Activated CD8-positive, alpha-beta T cell treated with anti-CD3 and anti-CD28 coated beads for 36 hours (primary cell): ENCODE measurements at regions of chr9 and their contacts with region 1.

Region 1: GRCh38 chr9:70352802-70353201 is 61.7 kb downstream of the KLF9 start:
- DNase-seq: no peak
- ATAC-seq: no peak
- H3K4me3 Mint-ChIP-seq: no peak overlapping the region
- H3K27ac Mint-ChIP-seq: no peak overlapping the region
- H3K4me1 Mint-ChIP-seq: peaks cover 2% of the 10 kb centered on the region
- H3K27me3 Mint-ChIP-seq: no peaks in the 10 kb centered on the region
- CTCF ChIP-seq: peak; percentile 19

Region 2: GRCh38 chr9:70484210-70485130 is 131.7 kb after region 1 on chr9:
- CTCF ChIA-PET with region 1: no interaction called
- POLR2A ChIA-PET with region 1: no interaction called
- intact Hi-C with region 1: loop called (anchors 10 kb)
- DNase-seq: no peak
- ATAC-seq: no peak
- H3K4me3 Mint-ChIP-seq: no peak overlapping the region
- H3K27ac Mint-ChIP-seq: no peak overlapping the region
- H3K4me1 Mint-ChIP-seq: peaks cover 4% of the 10 kb centered on the region
- H3K27me3 Mint-ChIP-seq: no peaks in the 10 kb centered on the region
- CTCF ChIP-seq: peak; percentile 59